Stomach (tissue), 19 donors: ENCODE measurements at regions of chr1 and their contacts with region 1.

Region 1: GRCh38 chr1:64675718-64676345 is 69.0 kb upstream of the RAVER2 start:
- DNase-seq: peak in 1 of 2 donors; percentile 59
- H3K4me3 ChIP-seq: no peak overlapping the region
- H3K27ac ChIP-seq: no peak overlapping the region
- H3K4me1 ChIP-seq: no peaks in the 10 kb centered on the region
- H3K27me3 ChIP-seq: no peaks in the 10 kb centered on the region
- CTCF ChIP-seq: peak in 3 of 7 experiments; percentile 58 to 70 (median 62)
- EP300 ChIP-seq: no peak
- POLR2A ChIP-seq: no peak

Region 2: DNA sequence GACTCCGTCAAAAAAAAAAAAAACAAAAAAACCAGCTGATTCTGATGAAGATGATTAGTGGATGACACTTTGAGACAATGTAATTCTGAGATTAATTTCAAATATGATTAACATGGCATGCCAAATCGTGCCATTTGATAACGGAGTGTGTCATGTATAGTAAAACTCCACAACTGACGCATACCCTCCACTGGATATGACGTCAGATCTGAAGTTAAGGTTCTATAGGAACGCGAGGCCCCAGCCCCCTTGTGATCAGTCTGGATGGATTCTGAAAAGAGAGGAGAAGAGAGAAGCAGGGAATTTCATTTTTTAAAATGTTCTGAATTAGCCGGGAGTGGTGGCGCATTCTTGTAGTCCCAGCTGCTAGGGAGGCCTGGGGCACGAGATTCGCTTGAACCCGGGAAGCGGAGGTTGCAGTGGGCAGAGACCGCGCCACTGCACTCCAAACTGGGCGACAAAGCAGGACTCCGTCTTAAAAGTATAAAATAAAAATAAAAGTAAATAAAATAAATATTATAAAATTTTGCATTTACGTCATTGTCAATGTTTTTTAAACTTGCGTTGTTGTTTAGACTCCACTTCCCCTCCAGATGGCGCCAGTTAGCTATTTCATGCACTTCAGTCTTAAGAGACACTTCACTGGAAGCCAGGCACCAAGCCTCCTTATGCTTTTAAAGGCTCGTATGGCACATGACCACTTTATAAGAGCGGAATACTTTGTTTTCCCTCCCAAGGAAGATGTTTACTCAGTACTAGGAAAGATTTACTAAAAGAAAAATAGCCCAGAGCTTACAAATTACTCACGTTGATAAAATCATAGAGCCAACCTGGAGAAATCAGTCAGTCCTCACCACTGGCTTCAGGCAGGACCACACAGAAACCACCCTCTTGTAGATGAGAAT is 406.9 kb before region 1 on chr1:
- intact Hi-C with region 1: loop called (anchors 10 kb)
- DNase-seq: peak; percentile 71 to 94
- H3K4me3 ChIP-seq: peak overlapping the region in 1 of 4 donors; percentile 3
- H3K27ac ChIP-seq: peak overlapping the region in 1 of 5 donors; percentile 24
- H3K4me1 ChIP-seq: peaks cover 0 to 7% (median 3%) of the 10 kb centered on the region in 4 donors
- H3K27me3 ChIP-seq: no peaks in the 10 kb centered on the region
- CTCF ChIP-seq: peak in 5 of 7 experiments; percentile 39 to 77 (median 64)
- EP300 ChIP-seq: no peak
- POLR2A ChIP-seq: no peak

Region 3: DNA sequence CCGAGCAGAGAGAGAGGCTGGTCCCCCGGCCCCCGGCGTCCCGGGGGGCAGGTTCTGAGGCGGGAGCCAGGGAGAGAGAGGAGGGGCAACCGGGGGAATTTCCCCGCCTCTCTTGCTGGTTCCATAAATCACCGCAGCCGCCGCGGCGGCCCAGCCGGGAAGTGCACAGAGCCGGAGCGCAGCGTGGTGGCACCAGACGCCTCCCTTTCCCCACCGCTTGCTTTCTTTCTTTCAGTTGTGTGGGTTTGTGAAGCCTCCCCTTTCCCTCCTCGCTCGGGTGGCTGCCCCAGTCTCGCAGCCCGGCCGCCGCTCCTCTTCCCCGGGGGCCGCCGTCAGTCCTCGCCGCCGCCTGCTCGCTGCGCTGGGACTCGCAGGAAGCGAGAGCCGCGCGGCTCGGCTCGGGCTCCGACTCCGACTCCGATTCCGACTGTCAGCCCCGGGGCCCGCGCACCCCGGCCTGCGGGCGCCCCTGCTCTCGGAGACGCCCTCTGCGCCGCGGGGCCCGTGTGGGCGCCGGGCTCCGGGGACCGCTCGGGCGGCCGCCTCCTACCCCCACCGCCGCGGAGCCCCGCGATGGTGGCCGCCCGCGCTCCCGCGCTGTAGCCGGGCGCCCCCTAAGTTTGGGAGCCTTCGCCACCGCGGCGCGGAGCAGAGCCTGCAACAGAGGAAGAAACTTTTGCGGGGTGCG is 205.7 kb before region 1 on chr1 and contains the start of gene CACHD1:
- intact Hi-C with region 1: loop called (anchors 10 kb)
- DNase-seq: peak; percentile 83 to 96
- H3K4me3 ChIP-seq: peak within 1 kb of the TSS; percentile 65 to 88 (median 84)
- H3K27ac ChIP-seq: peak within 1 kb of the TSS; percentile 81 to 92 (median 91)
- H3K4me1 ChIP-seq: peaks cover 12 to 52% (median 46%) of the 10 kb centered on the region in 4 donors
- H3K27me3 ChIP-seq: peaks cover 0 to 25% (median 0%) of the 10 kb centered on the region in 3 donors
- CTCF ChIP-seq: peak in 3 of 7 experiments; percentile 23 to 58 (median 55)
- EP300 ChIP-seq: no peak
- POLR2A ChIP-seq: no peak
- total RNA-seq, gene CACHD1: 1.4 to 22.8 (median 6.7) TPM

Region 4: GRCh38 chr1:64790832-64791487 is 115.1 kb after region 1 on chr1:
- intact Hi-C with region 1: no loop called
- DNase-seq: no peak
- H3K4me3 ChIP-seq: no peak overlapping the region
- H3K27ac ChIP-seq: no peak overlapping the region
- H3K4me1 ChIP-seq: no peaks in the 10 kb centered on the region
- H3K27me3 ChIP-seq: no peaks in the 10 kb centered on the region
- CTCF ChIP-seq: no peak
- EP300 ChIP-seq: no peak
- POLR2A ChIP-seq: no peak